ENCODE measurements at regions of chr6 and their contacts with region 1.

Region 1: GRCh38 chr6:7238900-7239589 is 74.0 kb downstream of the SSR1 start:
- DNase-seq: peak; percentile 34 to 87 (median 70)

Region 2: GRCh38 chr6:6676910-6677441 is 562.1 kb before region 1 on chr6:
- intact Hi-C with region 1: loop called (anchors 5 kb)
- DNase-seq: peak in 41 of 42 donors; percentile 47 to 92 (median 83)

Region 3: GRCh38 chr6:6724539-6725467 is 514.2 kb before region 1 on chr6:
- intact Hi-C with region 1: loop called (anchors 10 kb)
- DNase-seq: peak in 41 of 42 donors; percentile 41 to 81 (median 64)

Region 4: DNA sequence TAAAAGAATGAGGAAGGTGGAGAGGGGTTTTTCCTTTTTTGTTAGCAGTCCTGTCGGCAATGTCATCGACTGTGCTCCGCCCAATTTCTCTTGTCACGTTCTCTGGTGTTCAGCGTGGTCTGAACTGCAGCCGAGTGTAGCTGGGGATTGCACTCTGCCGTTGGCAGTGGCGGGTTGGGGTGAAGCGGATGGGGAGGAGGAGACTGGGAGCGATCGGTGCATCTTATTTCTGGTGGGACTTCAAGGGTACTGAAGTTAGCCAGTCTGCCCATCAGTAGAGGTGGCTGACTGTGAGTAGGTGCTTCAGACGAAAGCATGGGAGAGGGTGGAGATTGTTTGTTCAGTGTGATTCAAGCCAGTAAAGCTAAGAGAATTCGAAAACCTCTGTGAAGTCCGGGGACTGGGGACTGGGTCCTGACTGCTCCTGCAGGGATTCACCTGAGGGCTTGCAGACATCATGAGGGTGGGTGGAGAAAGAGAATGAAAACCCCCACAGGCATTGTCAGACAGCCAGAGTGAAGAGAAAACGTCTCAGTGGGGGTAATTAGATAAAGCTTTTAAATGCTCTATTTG is 126.2 kb before region 1 on chr6:
- intact Hi-C with region 1: loop called (anchors 10 kb)
- DNase-seq: no peak

Measured in head of caudate nucleus (tissue), 42 donors.